ACHN (cell line): ENCODE measurements at regions of chr1 and their contacts with region 1.

Region 1: DNA sequence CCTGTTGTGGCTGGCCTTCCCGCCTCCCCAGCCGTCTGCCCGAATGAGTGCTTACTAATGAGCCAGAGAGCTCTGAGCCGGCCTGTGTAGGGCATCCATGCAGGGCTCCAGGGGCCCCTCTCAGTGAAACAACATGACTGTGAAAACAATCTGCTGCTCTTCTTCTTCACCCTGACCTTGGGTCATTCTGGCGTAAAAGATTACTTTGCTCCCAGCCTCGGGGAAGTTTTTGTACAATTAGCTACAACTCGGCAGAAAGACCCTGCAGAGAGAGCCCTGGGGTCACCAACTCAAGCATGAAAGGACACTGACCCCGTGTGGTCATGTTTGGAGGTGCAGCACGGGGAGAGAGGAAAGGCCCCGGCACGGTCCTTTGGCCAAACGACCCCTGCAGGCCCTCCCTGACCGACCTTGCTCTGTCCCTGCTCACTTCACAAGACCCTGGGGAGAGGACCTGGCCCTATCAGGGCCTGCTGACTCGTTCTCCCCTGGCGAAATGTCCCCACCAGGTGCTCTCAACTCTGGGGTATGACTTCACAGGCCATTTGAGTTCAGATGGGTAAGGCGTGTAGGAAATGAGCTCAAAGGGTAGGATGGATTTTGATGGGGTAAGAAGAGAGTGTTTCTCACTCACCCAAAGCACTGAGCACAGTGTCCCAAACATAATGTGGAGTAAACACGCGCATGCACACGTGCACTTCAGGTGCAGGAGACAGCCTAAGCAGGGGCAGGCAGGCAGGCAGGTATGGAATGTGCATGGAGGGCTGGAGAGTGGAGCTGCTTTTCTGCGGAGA is 22.9 kb upstream of the FAM20B start:
- DNase-seq: peak; percentile 77

Region 2: DNA sequence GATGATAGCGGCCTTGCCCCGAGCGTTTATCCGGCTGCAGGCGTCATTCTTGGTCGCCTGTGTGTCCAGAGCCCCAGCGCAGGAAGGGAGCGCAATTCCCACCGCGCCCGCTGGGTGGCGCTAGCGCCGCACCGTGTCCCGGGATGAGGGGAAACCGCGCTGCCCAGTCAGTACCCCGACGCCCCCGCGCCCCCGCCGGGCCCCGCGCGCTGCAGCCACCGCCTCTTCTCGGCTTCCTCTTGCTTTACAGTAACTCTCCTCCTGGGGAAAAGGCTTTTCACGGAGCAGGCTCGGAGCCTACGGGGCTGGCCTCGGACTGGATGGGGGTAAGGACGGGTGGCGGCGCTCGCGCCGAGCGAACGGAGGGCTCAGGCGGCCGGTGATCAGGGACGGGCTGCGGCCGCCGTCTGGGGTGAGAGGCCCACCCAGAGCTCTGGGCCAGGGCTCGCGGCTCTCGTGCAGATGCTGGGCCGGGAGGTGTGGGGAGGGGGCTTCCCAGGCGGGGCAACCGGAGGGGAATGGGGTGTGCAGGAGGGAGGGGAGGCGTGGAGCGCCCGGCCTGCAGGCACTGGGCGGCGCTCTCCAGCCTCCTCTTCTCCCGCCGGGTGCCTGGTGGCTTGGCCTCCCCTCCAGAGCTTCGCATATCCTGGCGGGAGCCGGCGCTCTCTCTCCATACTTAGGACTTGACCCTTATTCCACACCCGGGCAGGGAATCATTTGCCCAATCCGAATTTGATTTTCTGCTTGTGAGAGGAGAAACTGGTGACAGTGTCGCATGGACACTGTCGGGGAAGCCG is 460.0 kb before region 1 on chr1:
- in situ Hi-C with region 1: loop called (anchors 25 kb)
- DNase-seq: peak; percentile 83

Region 3: GRCh38 chr1:178768423-178768822 is 234.3 kb before region 1 on chr1:
- in situ Hi-C with region 1: loop called (anchors 25 kb)
- DNase-seq: peak; percentile 29